ENCODE measurements at regions of chr3 and their contacts with region 1.

Region 1: GRCh38 chr3:117600112-117600511 is 890.5 kb downstream of the TUSC7 start:
- DNase-seq: no peak
- H3K4me3 Mint-ChIP-seq: no peak overlapping the region
- H3K27ac Mint-ChIP-seq: no peak overlapping the region
- H3K4me1 Mint-ChIP-seq: no peaks in the 10 kb centered on the region
- H3K27me3 Mint-ChIP-seq: no peaks in the 10 kb centered on the region

Region 2: DNA sequence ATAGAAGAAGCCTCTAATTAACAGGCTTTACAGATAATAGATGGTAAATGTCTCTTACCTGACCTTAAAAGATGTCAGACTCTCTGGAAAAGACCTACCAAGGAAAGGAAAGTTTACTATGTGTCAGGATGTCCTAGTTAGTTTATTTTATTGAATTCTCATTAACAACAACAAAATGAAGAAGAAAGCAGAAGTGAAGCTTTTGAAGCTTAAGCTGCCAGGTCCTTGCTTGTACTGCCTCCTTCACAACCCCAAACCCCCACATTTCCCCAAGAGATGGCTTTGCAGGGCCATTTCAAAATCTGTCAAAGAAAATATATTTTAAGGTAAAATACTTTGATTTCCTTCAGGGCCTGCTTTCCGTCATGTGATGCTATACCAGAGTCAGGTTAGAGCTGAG is 92.2 kb before region 1 on chr3:
- CTCF ChIA-PET with region 1: no interaction called
- POLR2A ChIA-PET with region 1: no interaction called
- intact Hi-C with region 1: no loop called
- DNase-seq: no peak
- H3K4me3 Mint-ChIP-seq: no peak overlapping the region
- H3K27ac Mint-ChIP-seq: no peak overlapping the region
- H3K4me1 Mint-ChIP-seq: no peaks in the 10 kb centered on the region
- H3K27me3 Mint-ChIP-seq: no peaks in the 10 kb centered on the region

Region 3: GRCh38 chr3:117553461-117553860 is 46.7 kb before region 1 on chr3:
- CTCF ChIA-PET with region 1: no interaction called
- POLR2A ChIA-PET with region 1: no interaction called
- intact Hi-C with region 1: no loop called
- DNase-seq: no peak
- H3K4me3 Mint-ChIP-seq: no peak overlapping the region
- H3K27ac Mint-ChIP-seq: no peak overlapping the region
- H3K4me1 Mint-ChIP-seq: no peaks in the 10 kb centered on the region
- H3K27me3 Mint-ChIP-seq: no peaks in the 10 kb centered on the region

Region 4: DNA sequence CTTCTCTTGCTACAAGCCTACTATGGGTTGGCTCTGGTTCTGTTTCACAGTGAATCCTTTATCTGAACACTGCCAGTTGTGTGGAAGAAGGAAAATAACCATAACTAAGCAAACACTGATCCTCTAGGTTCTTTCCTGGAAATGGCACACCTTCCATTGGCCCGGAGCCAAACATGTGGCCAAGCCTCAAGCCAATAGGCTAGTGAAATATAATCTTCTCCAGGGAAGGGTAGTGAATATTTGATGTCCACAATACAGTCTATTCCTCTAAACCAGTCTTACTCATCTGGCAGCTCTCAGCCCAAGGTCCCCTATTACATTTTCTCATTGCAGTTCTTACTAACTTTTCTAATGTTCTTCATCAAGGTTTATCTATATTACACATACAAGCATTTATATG is 30.8 kb after region 1 on chr3:
- CTCF ChIA-PET with region 1: no interaction called
- POLR2A ChIA-PET with region 1: no interaction called
- intact Hi-C with region 1: loop called (anchors 1 kb)
- DNase-seq: no peak
- H3K4me3 Mint-ChIP-seq: no peak overlapping the region
- H3K27ac Mint-ChIP-seq: no peak overlapping the region
- H3K4me1 Mint-ChIP-seq: no peaks in the 10 kb centered on the region
- H3K27me3 Mint-ChIP-seq: no peaks in the 10 kb centered on the region